Activated B cell treated with CpG ODN at 0.5 μM for 24 hours (primary cell): ENCODE measurements at regions of chr20 and their contacts with region 1.

Region 1: DNA sequence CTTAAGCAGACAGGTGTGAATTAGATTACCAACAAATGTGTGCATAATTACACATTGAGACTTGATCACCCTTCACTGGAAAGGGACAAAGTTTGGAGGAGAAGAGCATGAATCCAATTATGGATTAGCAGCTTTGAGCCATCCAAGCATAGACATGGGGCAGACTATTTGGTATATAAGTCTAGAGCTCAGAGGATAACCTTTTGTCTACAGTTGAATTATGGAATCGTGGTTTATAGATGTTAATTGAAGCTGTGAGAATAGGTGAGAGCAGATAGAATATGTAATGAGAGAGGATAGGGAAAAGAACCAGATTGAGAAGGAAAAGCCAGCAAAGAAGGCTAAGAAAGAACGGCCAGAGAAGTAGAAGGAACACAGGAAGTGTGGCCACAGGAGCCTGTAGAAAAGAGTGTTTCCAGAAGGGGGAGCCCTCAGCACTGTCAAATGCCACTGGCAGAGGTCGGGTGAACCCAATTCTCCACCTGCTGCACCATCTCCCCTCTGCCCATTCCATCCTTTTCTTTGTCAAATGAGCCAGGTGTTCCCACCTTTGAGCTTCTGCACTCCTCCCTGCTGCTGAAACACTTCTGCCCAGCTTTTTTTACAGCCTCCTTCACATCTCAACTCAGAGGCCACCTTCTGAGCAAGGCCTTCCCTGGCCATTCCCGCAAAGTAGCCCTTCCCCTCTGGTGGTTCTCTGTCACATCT is 7.3 kb downstream of the DNTTIP1 start:
- DNase-seq: peak; percentile 25
- ATAC-seq: peak; percentile 95
- H3K4me3 Mint-ChIP-seq: no peak overlapping the region
- H3K27ac Mint-ChIP-seq: no peak overlapping the region
- H3K4me1 Mint-ChIP-seq: peaks cover 9% of the 10 kb centered on the region
- H3K27me3 Mint-ChIP-seq: no peaks in the 10 kb centered on the region
- CTCF ChIP-seq: no peak

Region 2: DNA sequence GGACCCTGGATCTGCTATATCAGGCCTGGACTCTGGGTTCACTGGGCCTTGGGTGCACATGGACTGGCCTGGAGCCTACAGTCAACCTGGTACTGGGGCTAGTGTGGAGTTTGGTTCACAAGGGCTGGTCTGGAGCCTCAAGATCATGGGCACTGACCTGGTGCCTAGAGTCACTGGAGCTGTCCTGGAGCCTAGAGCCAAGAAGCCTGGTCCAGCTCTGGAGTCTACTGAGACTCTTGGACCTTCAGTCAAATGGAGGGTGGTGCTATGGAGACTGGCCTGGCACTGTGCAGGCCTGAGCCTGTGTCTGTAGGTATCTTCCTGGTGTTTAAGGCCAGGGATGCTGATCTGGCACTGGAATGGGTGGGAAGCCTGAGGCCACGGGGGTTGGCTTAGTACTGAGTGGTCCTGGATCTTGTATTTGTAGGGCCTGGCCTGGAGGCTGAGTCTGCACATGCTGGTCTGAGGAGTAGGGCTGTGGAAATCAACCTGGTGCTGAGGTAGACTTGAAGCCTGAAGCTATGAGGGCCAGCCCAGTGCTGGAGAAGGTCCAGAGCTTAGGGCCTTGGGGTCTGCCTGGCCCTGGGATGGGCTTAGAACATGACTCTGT is 151.5 kb before region 1 on chr20:
- CTCF ChIA-PET with region 1: no interaction called
- POLR2A ChIA-PET with region 1: no interaction called
- intact Hi-C with region 1: no loop called
- DNase-seq: no peak
- ATAC-seq: no peak
- H3K4me3 Mint-ChIP-seq: no peak overlapping the region
- H3K27ac Mint-ChIP-seq: no peak overlapping the region
- H3K4me1 Mint-ChIP-seq: no peaks in the 10 kb centered on the region
- H3K27me3 Mint-ChIP-seq: peaks cover 15% of the 10 kb centered on the region
- CTCF ChIP-seq: no peak

Region 3: DNA sequence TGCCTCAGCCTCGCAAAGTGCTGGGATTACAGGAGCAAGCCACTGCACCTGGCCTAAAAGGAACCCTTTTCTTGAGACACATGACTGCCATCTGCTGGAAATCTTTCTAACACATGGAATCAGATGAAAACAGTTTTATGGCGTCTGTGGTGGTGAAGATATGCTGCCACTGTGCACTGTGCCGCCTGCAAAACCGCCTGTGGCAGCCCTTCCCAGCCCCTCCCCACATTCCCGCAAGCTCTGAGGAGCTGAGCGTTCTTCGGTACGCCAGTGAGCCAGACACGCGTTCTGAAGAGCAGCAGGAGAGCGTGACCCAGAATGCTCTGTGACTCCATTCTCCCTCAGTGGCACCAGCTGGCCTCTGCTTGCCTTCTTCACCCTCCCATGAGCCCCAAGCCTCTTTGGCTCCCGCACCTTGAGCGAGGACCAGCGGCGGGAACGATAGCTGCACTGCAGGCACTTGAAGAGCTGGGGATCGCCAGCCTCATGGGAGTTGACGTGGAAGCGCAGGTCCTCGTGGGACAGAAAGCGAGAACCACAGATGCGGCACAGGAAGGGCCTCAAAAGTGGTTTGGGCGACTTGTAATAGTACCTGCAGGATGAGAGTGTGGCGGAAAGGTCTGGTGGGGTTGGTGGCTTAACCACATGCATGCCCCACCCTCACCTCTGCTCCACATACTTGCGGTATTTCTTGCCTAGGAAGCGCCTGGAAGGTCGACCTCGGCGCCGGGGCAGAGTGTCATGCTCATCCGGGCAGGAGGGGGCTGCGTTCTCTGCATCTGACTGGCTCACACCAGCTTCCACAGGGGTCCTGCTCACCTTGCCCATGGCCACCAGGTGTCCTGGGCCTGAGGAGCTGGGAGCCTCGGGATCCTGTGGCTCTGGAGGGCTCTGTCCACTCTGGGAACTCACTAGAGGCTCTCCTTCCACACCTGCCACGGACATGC is 164.2 kb after region 1 on chr20:
- CTCF ChIA-PET with region 1: interaction called, 26 read pairs
- POLR2A ChIA-PET with region 1: no interaction called
- intact Hi-C with region 1: loop called (anchors 1 kb)
- DNase-seq: no peak
- ATAC-seq: no peak
- H3K4me3 Mint-ChIP-seq: no peak overlapping the region
- H3K27ac Mint-ChIP-seq: no peak overlapping the region
- H3K4me1 Mint-ChIP-seq: peaks cover 21% of the 10 kb centered on the region
- H3K27me3 Mint-ChIP-seq: no peaks in the 10 kb centered on the region
- CTCF ChIP-seq: no peak

Region 4: DNA sequence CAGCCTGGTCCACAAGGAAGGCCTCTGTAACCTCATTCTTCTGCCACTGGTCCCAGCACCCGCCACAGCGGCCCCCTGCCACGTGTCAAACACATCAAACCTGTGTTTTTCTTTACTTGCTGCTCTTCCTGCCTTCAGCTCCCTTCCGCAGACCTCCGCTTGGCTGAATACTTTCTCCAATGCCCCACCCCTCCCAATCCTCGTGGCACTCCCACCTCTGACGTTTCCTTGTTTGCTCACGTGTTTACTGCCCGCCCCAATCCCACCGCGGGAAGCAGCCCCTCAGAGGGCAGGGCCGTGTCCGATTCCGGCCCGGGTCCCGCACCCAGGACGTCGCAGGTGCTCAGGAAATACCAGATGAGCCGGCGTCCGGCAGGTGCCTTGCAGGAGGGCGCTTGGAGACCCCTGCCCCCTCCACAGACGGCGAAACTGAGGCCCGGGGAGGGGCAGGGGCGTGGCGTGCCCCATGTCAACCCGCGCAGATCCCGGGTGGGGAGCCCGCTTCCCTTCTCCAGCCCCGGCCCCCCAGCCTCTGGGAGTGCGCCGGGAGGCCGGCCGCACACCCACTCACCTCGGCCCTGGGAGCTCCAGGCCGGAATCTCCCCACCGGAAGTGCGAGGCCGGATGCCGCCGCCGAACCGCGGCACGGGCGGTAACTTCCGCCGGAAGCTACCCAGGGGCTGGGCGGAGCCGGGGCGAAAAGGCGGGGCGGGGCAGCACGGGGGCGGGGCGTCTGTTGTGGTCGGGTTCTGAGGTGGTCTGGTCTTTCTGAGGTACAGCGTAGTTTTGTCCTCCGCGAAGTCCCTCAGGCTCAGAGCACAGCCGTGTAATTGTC is 564.9 kb after region 1 on chr20:
- CTCF ChIA-PET with region 1: no interaction called
- POLR2A ChIA-PET with region 1: no interaction called
- intact Hi-C with region 1: loop called (anchors 10 kb)
- DNase-seq: peak; percentile 84
- ATAC-seq: peak; percentile 79
- H3K4me3 Mint-ChIP-seq: peak overlapping the region; percentile 93
- H3K27ac Mint-ChIP-seq: peak overlapping the region; percentile 90
- H3K4me1 Mint-ChIP-seq: peaks cover 54% of the 10 kb centered on the region
- H3K27me3 Mint-ChIP-seq: no peaks in the 10 kb centered on the region
- CTCF ChIP-seq: no peak